ENCODE measurements at regions of chr5 and their contacts with region 1.

Region 1: GRCh38 chr5:131394128-131394527 is 130.3 kb downstream of the CDC42SE2 start:
- DNase-seq: peak; percentile 75 to 88 (median 83)
- H3K4me3 ChIP-seq: no peak overlapping the region
- H3K4me3 Mint-ChIP-seq: peak overlapping the region; percentile 41 to 79 (median 73)
- H3K27ac ChIP-seq: peak overlapping the region; percentile 85
- H3K27ac Mint-ChIP-seq: peak overlapping the region; percentile 95 to 99 (median 97)
- H3K4me1 ChIP-seq: peaks cover 77% of the 10 kb centered on the region
- H3K4me1 Mint-ChIP-seq: peaks cover 67 to 93% (median 80%) of the 10 kb centered on the region in 4 donors
- H3K27me3 ChIP-seq: no peaks in the 10 kb centered on the region
- H3K27me3 Mint-ChIP-seq: no peaks in the 10 kb centered on the region

Region 2: GRCh38 chr5:130520211-130520610 is 873.9 kb before region 1 on chr5:
- CTCF ChIA-PET with region 1: no interaction called
- POLR2A ChIA-PET with region 1: no interaction called
- intact Hi-C with region 1: no loop called
- DNase-seq: no peak
- H3K4me3 ChIP-seq: no peak overlapping the region
- H3K4me3 Mint-ChIP-seq: no peak overlapping the region
- H3K27ac ChIP-seq: no peak overlapping the region
- H3K27ac Mint-ChIP-seq: no peak overlapping the region
- H3K4me1 ChIP-seq: no peaks in the 10 kb centered on the region
- H3K4me1 Mint-ChIP-seq: no peaks in the 10 kb centered on the region
- H3K27me3 ChIP-seq: no peaks in the 10 kb centered on the region
- H3K27me3 Mint-ChIP-seq: peaks cover 3 to 5% of the 10 kb centered on the region in 2 donors

Region 3: DNA sequence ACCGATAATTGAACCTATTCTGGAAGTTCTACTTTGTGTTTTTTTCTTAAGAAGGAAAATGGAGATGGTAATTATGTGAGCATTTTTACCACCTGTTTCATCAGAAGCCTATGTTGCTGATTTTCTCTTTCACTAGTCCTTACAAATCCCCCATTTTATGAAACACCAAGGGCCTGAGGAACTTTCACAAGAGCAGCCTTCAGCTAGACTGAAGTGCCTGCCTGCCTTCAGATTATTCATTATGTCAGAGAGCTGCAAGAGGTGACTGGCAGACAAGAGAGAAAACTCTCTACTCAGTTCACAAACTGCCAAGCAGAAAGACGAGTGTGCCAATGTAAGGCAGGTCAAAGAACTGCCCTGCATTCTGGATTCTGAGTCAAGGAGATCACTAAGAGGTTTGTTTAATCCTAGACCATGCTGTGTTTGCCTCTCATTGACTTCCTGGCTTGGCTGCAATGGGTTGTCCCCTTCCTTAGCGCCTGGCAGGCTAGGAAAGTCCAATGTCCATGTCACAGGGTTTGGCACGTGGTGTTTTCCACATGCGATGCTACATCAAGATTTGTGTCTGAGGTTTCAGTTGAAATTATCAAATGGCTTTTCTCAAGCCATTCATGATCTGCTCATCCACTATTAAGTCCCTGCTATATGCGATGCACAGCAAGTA is 13.0 kb after region 1 on chr5:
- CTCF ChIA-PET with region 1: interaction called, 5 read pairs
- POLR2A ChIA-PET with region 1: interaction called, 39 read pairs
- intact Hi-C with region 1: no loop called
- DNase-seq: no peak
- H3K4me3 ChIP-seq: no peak overlapping the region
- H3K4me3 Mint-ChIP-seq: no peak overlapping the region
- H3K27ac ChIP-seq: no peak overlapping the region
- H3K27ac Mint-ChIP-seq: peak overlapping the region in 6 of 7 donors; percentile 11 to 82 (median 47)
- H3K4me1 ChIP-seq: no peaks in the 10 kb centered on the region
- H3K4me1 Mint-ChIP-seq: peaks cover 3 to 22% (median 12%) of the 10 kb centered on the region in 4 donors
- H3K27me3 ChIP-seq: no peaks in the 10 kb centered on the region
- H3K27me3 Mint-ChIP-seq: no peaks in the 10 kb centered on the region

Region 4: GRCh38 chr5:131796793-131797693 is 402.9 kb after region 1 on chr5 and contains the start of gene FNIP1:
- CTCF ChIA-PET with region 1: no interaction called
- POLR2A ChIA-PET with region 1: no interaction called
- intact Hi-C with region 1: no loop called
- DNase-seq: peak; percentile 96 to 98 (median 97)
- H3K4me3 ChIP-seq: peak within 1 kb of the TSS; percentile 76 to 90
- H3K4me3 Mint-ChIP-seq: peak within 1 kb of the TSS; percentile 92 to 97 (median 96)
- H3K27ac ChIP-seq: peak within 1 kb of the TSS; percentile 96
- H3K27ac Mint-ChIP-seq: peak within 1 kb of the TSS; percentile 94 to 99 (median 98)
- H3K4me1 ChIP-seq: peaks cover 45% of the 10 kb centered on the region
- H3K4me1 Mint-ChIP-seq: peaks cover 19 to 43% (median 24%) of the 10 kb centered on the region in 4 donors
- H3K27me3 ChIP-seq: no peaks in the 10 kb centered on the region
- H3K27me3 Mint-ChIP-seq: no peaks in the 10 kb centered on the region
- total RNA-seq, gene FNIP1: 34.9 to 35.9 TPM